ENCODE measurements at regions of chr3 and their contacts with region 1.

Region 1: GRCh38 chr3:99114565-99115291 is 213.2 kb upstream of the DCBLD2 start:
- DNase-seq: peak; percentile 70
- H3K4me3 ChIP-seq: no peak overlapping the region
- H3K27ac ChIP-seq: no peak overlapping the region
- H3K4me1 ChIP-seq: peaks cover under 1% of the 10 kb centered on the region
- H3K27me3 ChIP-seq: no peaks in the 10 kb centered on the region
- CTCF ChIP-seq: peak; percentile 90 to 91
- POLR2A ChIP-seq: no peak

Region 2: GRCh38 chr3:98930413-98930812 is 184.3 kb before region 1 on chr3:
- CTCF ChIA-PET with region 1: no interaction called
- POLR2A ChIA-PET with region 1: no interaction called
- dilution Hi-C with region 1: no loop called
- intact Hi-C with region 1: no loop called
- DNase-seq: no peak
- H3K4me3 ChIP-seq: no peak overlapping the region
- H3K27ac ChIP-seq: no peak overlapping the region
- H3K4me1 ChIP-seq: no peaks in the 10 kb centered on the region
- H3K27me3 ChIP-seq: no peaks in the 10 kb centered on the region
- CTCF ChIP-seq: no peak
- POLR2A ChIP-seq: no peak

Region 3: GRCh38 chr3:99023590-99024192 is 91.0 kb before region 1 on chr3:
- CTCF ChIA-PET with region 1: interaction called, 21 read pairs
- POLR2A ChIA-PET with region 1: no interaction called
- dilution Hi-C with region 1: no loop called
- intact Hi-C with region 1: loop called (anchors 1 kb)
- DNase-seq: peak; percentile 66
- H3K4me3 ChIP-seq: no peak overlapping the region
- H3K27ac ChIP-seq: no peak overlapping the region
- H3K4me1 ChIP-seq: no peaks in the 10 kb centered on the region
- H3K27me3 ChIP-seq: no peaks in the 10 kb centered on the region
- CTCF ChIP-seq: peak; percentile 40 to 46
- POLR2A ChIP-seq: no peak

Region 4: GRCh38 chr3:99532246-99532645 is 417.5 kb after region 1 on chr3:
- CTCF ChIA-PET with region 1: interaction called, 10 read pairs
- POLR2A ChIA-PET with region 1: no interaction called
- dilution Hi-C with region 1: no loop called
- intact Hi-C with region 1: loop called (anchors 1 kb)
- DNase-seq: peak; percentile 88
- H3K4me3 ChIP-seq: no peak overlapping the region
- H3K27ac ChIP-seq: peak overlapping the region; percentile 5
- H3K4me1 ChIP-seq: no peaks in the 10 kb centered on the region
- H3K27me3 ChIP-seq: no peaks in the 10 kb centered on the region
- CTCF ChIP-seq: peak; percentile 75 to 81
- POLR2A ChIP-seq: no peak

Region 5: GRCh38 chr3:99645277-99646106 is 530.8 kb after region 1 on chr3:
- CTCF ChIA-PET with region 1: interaction called, 11 read pairs
- POLR2A ChIA-PET with region 1: no interaction called
- dilution Hi-C with region 1: no loop called
- intact Hi-C with region 1: no loop called
- DNase-seq: peak; percentile 76
- H3K4me3 ChIP-seq: no peak overlapping the region
- H3K27ac ChIP-seq: peak overlapping the region; percentile 75
- H3K4me1 ChIP-seq: peaks cover 97% of the 10 kb centered on the region
- H3K27me3 ChIP-seq: no peaks in the 10 kb centered on the region
- CTCF ChIP-seq: peak; percentile 47 to 68
- POLR2A ChIP-seq: peak; percentile 34

Region 6: DNA sequence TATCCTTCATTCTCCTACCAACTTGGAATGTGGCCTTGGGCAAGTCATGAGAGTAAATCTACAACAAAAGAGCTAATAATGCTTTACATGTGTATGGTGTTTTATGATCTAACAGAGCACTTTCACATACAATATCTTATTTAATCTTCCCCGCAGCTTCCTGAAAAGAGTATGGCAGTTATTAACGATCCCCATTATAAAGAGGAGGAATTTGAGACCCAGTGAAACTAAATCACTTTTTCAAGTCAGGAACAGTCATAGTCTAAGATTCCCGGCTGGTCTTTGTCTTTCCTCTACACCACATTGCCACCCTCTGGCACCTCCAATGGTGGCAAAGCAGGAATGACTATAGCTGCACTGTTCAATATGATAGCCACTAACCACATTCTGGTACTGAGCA is 633.2 kb after region 1 on chr3:
- CTCF ChIA-PET with region 1: interaction called, 18 read pairs
- POLR2A ChIA-PET with region 1: no interaction called
- dilution Hi-C with region 1: no loop called
- intact Hi-C with region 1: loop called (anchors 1 kb)
- DNase-seq: peak; percentile 62
- H3K4me3 ChIP-seq: no peak overlapping the region
- H3K27ac ChIP-seq: peak overlapping the region; percentile 12
- H3K4me1 ChIP-seq: peaks cover 24% of the 10 kb centered on the region
- H3K27me3 ChIP-seq: no peaks in the 10 kb centered on the region
- CTCF ChIP-seq: peak; percentile 23 to 27
- POLR2A ChIP-seq: no peak

Region 7: GRCh38 chr3:99789011-99789721 is 674.4 kb after region 1 on chr3:
- CTCF ChIA-PET with region 1: interaction called, 22 read pairs
- POLR2A ChIA-PET with region 1: no interaction called
- dilution Hi-C with region 1: no loop called
- intact Hi-C with region 1: loop called (anchors 1 kb)
- DNase-seq: peak; percentile 68
- H3K4me3 ChIP-seq: no peak overlapping the region
- H3K27ac ChIP-seq: no peak overlapping the region
- H3K4me1 ChIP-seq: no peaks in the 10 kb centered on the region
- H3K27me3 ChIP-seq: no peaks in the 10 kb centered on the region
- CTCF ChIP-seq: peak; percentile 52 to 58
- POLR2A ChIP-seq: no peak

Measured in endothelial cell of umbilical vein (primary cell).